Heart left ventricle (tissue), 16 donors: ENCODE measurements at regions of chr2 and their contacts with region 1.

Region 1: GRCh38 chr2:201231781-201232466 is 28.4 kb upstream of the CASP8 start:
- DNase-seq: peak; percentile 86 to 91 (median 89)
- ATAC-seq: peak; percentile 82 to 90 (median 90)
- H3K4me3 ChIP-seq: peak overlapping the region in 3 of 12 donors; percentile 5 to 20 (median 19)
- H3K27ac ChIP-seq: peak overlapping the region in 8 of 12 donors; percentile 12 to 66 (median 36)
- H3K4me1 ChIP-seq: peaks cover 0 to 63% (median 15%) of the 10 kb centered on the region in 12 donors
- H3K27me3 ChIP-seq: no peaks in the 10 kb centered on the region
- CTCF ChIP-seq: peak; percentile 81 to 93 (median 88)
- POLR2A ChIP-seq: no peak

Region 2: GRCh38 chr2:200901459-200902072 is 330.4 kb before region 1 on chr2:
- intact Hi-C with region 1: loop called in 2 of 10 experiments (anchors 5 kb)
- DNase-seq: peak in 3 of 5 donors; percentile 43 to 67 (median 56)
- ATAC-seq: peak; percentile 61 to 88 (median 84)
- H3K4me3 ChIP-seq: no peak overlapping the region
- H3K27ac ChIP-seq: peak overlapping the region in 1 of 12 donors; percentile 9
- H3K4me1 ChIP-seq: peaks cover 0 to 21% (median 2%) of the 10 kb centered on the region in 12 donors
- H3K27me3 ChIP-seq: no peaks in the 10 kb centered on the region
- CTCF ChIP-seq: peak; percentile 61 to 82 (median 76)
- POLR2A ChIP-seq: no peak

Region 3: DNA sequence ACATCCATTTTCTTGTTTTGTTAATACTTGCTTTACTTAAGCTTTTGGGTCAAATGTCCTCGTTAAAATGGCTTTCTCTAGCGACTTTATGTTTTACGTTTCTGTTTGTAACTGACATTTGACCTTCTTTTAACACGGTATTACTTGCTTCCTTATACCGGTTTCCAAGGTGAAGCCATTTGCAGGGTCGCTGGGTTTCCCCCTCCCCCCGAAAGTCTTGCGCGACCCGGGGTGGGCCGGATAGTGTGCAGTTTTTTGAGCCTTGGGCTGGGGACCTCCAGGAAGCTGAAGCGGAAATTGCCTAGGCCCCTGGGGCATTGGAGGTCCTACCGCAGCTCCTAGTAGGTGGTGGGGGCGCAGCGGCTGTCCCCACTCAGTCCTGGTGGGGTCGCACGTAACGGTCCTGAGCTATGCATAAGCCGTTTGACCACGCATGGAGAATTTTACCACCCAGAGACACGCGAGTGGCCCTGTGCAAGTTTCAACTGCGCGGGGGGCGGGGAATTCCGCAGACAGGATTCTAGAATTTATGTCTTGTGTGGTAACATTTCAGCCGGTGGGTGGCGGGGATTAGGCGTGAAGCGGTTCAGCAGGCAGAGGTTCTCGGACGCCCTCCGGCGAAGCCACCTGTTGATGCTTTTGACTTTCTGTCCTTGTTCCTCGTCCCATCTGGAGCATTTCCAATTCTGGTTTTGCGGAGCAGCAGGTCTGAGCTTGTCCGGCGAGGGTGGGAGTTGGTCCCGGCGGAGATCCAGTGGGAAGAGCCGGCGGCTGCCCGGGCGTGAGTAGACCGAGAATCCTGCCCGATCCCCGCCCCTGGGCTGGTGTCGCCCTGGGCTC is 113.6 kb before region 1 on chr2:
- intact Hi-C with region 1: loop called in 3 of 10 experiments (anchors 5 to 10 kb)
- DNase-seq: peak; percentile 91 to 95 (median 92)
- ATAC-seq: peak; percentile 44 to 75 (median 52)
- H3K4me3 ChIP-seq: peak overlapping the region; percentile 65 to 99 (median 85)
- H3K27ac ChIP-seq: peak overlapping the region; percentile 94 to 100 (median 100)
- H3K4me1 ChIP-seq: peaks cover 0 to 55% (median 30%) of the 10 kb centered on the region in 12 donors
- H3K27me3 ChIP-seq: no peaks in the 10 kb centered on the region
- CTCF ChIP-seq: peak; percentile 19 to 65 (median 51)
- POLR2A ChIP-seq: peak in 1 of 2 donors; percentile 71

Region 4: GRCh38 chr2:201139836-201140604 is 91.9 kb before region 1 on chr2:
- intact Hi-C with region 1: no loop called
- DNase-seq: no peak
- ATAC-seq: no peak
- H3K4me3 ChIP-seq: no peak overlapping the region
- H3K27ac ChIP-seq: peak overlapping the region in 5 of 12 donors; percentile 6 to 32 (median 18)
- H3K4me1 ChIP-seq: peaks cover 3 to 57% (median 23%) of the 10 kb centered on the region in 12 donors
- H3K27me3 ChIP-seq: no peaks in the 10 kb centered on the region
- CTCF ChIP-seq: no peak
- POLR2A ChIP-seq: no peak

Region 5: GRCh38 chr2:201191132-201191875 is 40.6 kb before region 1 on chr2:
- intact Hi-C with region 1: loop called in 4 of 10 experiments (anchors 2 to 5 kb)
- DNase-seq: peak in 1 of 5 donors; percentile 30
- ATAC-seq: peak; percentile 69 to 93 (median 86)
- H3K4me3 ChIP-seq: no peak overlapping the region
- H3K27ac ChIP-seq: peak overlapping the region in 10 of 12 donors; percentile 47 to 82 (median 69)
- H3K4me1 ChIP-seq: peaks cover 0 to 74% (median 23%) of the 10 kb centered on the region in 12 donors
- H3K27me3 ChIP-seq: no peaks in the 10 kb centered on the region
- CTCF ChIP-seq: no peak
- POLR2A ChIP-seq: no peak

Region 6: DNA sequence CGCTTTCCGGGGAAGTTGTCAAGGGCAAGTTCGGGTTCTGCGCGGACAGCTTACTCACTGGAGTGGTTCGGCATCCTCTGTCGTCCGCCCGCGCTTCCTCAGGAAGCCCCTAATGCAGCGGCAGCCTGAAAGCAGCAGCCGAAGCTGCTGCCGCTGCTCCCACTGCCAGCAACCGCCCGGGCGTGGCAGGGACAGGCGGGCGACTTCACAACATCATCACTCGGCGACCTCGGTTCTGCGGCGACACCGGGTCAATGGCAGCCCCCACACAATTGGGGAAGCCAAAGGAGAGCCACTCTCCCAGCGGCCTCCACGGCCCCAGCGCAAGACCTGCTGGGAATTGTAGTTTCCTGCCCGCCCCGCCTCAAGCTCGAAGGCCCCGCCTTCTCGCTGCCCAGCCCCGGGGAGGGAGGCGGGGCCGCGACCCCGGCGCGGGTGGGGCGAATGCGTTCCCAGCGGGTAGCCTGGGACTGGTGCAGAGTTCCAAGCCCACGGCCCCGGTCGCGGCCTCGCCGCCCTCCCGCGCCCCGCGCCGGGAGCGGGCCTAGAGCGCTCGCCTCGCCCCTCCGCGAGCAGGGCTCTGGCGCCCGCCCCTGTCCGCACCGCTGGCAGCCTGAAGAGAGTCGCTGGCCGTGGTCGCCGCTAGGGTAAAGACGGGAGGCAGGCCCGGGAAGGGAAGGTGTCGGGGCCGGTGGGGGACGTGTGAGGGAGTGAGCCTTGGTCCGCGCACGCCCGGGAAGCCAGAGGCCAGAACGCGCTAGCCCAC is 219.6 kb after region 1 on chr2 and contains the starts of genes STRADB and TRAK2:
- intact Hi-C with region 1: loop called in 1 of 10 experiments (anchors 10 kb)
- DNase-seq: peak; percentile 96 to 98 (median 97)
- ATAC-seq: peak; percentile 97 to 99 (median 98)
- H3K4me3 ChIP-seq: peak within 1 kb of the TSS; percentile 72 to 97 (median 86)
- H3K27ac ChIP-seq: peak within 1 kb of the TSS; percentile 85 to 98 (median 92)
- H3K4me1 ChIP-seq: peaks cover 0 to 62% (median 43%) of the 10 kb centered on the region in 12 donors
- H3K27me3 ChIP-seq: no peaks in the 10 kb centered on the region
- CTCF ChIP-seq: peak in 7 of 12 donors; percentile 21 to 51 (median 42)
- POLR2A ChIP-seq: peak; percentile 41 to 88
- total RNA-seq, gene STRADB: 45.0 to 105 (median 57.9) TPM
- total RNA-seq, gene TRAK2: 110 to 201 (median 146) TPM